Head of caudate nucleus (tissue), 42 donors: ENCODE measurements at regions of chr5 and their contacts with region 1.

Region 1: GRCh38 chr5:1134478-1134877 is 22.6 kb upstream of the SLC12A7 start:
- DNase-seq: no peak

Region 2: GRCh38 chr5:989961-990530 is 144.4 kb before region 1 on chr5:
- intact Hi-C with region 1: loop called (anchors 10 kb)
- DNase-seq: peak in 34 of 42 donors; percentile 25 to 76 (median 58)